Activated CD4-positive, alpha-beta T cell treated with anti-CD3 and anti-CD28 coated beads, Interleukin-2, amount 10 ng/mL, durations not matched to agents 24 days and 14 days (primary cell): ENCODE measurements at regions of chr17 and their contacts with region 1.

Region 1: DNA sequence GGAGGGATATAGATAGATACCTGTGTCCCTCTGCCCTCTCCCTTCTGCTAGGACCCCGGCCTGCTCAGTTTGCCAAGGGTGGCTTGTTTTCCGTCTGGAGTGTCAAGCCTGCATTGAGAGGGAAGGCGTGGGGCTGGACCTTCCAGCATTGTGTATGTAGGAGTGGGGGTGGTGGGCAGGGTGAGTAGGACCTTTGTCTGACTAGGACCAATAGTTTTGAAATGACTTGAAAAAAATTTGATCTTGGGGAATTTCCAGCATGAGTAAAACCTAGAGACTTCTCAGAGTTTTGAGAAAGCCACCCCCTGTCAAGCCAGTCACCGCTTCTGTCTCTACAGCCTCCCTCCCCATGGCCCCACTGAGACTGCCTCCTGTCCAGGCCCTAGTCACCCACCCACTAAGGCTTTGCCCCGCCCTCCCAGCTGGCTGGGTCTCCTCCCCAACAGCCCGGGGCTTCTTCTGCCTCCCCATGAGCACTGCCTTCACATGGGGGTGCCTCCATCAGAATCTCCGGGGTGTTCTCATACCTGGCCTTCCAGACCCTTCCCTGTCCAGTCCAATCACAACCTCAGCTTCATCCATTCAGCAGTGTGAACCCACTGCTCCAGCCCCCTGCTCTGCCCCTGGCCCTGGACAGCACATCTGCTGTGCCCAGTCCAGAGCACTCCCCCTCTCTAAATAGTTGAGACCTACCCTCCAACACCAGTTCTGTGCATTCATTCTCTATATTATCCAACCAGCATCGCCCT is 207.0 kb downstream of the MSI2 start:
- DNase-seq: peak; percentile 92
- H3K4me3 Mint-ChIP-seq: peak overlapping the region; percentile 76
- H3K27ac Mint-ChIP-seq: peak overlapping the region; percentile 97
- H3K4me1 Mint-ChIP-seq: peaks cover 73% of the 10 kb centered on the region
- H3K27me3 Mint-ChIP-seq: no peaks in the 10 kb centered on the region

Region 2: DNA sequence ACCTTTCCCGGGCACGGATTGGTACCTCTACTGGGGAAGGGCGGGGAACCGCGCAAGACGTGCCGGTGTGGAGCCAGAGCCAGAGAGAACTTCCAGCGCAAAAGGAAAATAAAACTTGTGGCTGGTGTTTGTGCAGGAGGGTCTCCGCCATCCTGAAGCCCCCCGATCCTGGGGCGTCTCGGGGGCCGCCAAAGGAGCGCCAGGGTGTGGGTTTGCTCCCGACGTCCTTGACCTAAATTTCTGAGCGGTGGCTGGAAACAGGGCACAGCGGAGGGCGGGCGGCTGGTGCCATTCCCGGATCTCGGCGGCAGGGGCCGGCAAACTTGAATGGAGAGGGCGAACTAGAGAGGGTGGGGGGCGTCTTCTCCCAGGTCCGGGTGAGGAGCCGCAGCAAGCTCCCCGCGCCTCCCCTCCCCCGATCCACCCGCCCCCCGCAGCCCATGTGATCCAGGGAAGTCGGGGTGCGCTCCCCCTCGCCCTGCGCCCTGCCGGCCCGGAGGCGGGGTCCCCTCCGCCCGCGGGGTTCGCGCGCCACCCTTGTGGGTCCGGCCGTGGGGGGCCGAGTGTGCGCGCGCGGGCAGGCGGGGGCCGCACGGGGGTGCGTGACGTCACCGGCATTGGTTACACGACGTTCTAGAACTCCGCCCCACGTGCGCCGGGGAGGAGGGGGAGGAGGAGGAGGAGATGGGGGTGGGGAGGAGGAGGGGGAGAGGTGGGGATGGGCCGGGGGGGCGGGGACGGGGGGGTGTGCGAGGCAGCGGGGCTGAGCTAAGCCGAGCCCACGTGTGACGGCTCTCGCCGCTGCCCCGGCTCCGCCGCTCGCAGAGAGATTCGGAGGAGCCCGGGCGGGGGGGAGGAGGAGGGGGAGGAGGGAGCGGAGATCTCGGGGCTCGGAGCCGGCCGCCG is 207.2 kb before region 1 on chr17 and contains the start of gene MSI2:
- intact Hi-C with region 1: loop called (anchors 2 kb)
- DNase-seq: peak; percentile 97
- H3K4me3 Mint-ChIP-seq: peak within 1 kb of the TSS; percentile 89
- H3K27ac Mint-ChIP-seq: peak within 1 kb of the TSS; percentile 91
- H3K4me1 Mint-ChIP-seq: peaks cover 42% of the 10 kb centered on the region
- H3K27me3 Mint-ChIP-seq: peaks cover 7% of the 10 kb centered on the region
- total RNA-seq, gene MSI2: 171 and 172 TPM in 2 replicates

Region 3: GRCh38 chr17:57284984-57285646 is 178.2 kb before region 1 on chr17:
- intact Hi-C with region 1: loop called (anchors 5 kb)
- DNase-seq: peak; percentile 90
- H3K4me3 Mint-ChIP-seq: peak overlapping the region; percentile 76
- H3K27ac Mint-ChIP-seq: peak overlapping the region; percentile 91
- H3K4me1 Mint-ChIP-seq: peaks cover 82% of the 10 kb centered on the region
- H3K27me3 Mint-ChIP-seq: no peaks in the 10 kb centered on the region

Region 4: GRCh38 chr17:57507828-57508227 is 44.6 kb after region 1 on chr17:
- intact Hi-C with region 1: loop called (anchors 1 kb)
- DNase-seq: no peak
- H3K4me3 Mint-ChIP-seq: no peak overlapping the region
- H3K27ac Mint-ChIP-seq: no peak overlapping the region
- H3K4me1 Mint-ChIP-seq: peaks cover 15% of the 10 kb centered on the region
- H3K27me3 Mint-ChIP-seq: no peaks in the 10 kb centered on the region

Region 5: GRCh38 chr17:57604771-57605674 is 141.7 kb after region 1 on chr17:
- intact Hi-C with region 1: loop called (anchors 5 kb)
- DNase-seq: peak; percentile 73
- H3K4me3 Mint-ChIP-seq: peak overlapping the region; percentile 67
- H3K27ac Mint-ChIP-seq: peak overlapping the region; percentile 95
- H3K4me1 Mint-ChIP-seq: peaks cover 65% of the 10 kb centered on the region
- H3K27me3 Mint-ChIP-seq: no peaks in the 10 kb centered on the region